ENCODE measurements at regions of chr6 and their contacts with region 1.

Region 1: GRCh38 chr6:31971993-31972708 is at the start of gene DXO:
- DNase-seq: peak; percentile 98
- ATAC-seq: peak; percentile 89
- H3K4me3 ChIP-seq: peak within 1 kb of the TSS; percentile 89
- H3K27ac ChIP-seq: peak within 1 kb of the TSS; percentile 86
- H3K4me1 ChIP-seq: peaks cover 23% of the 10 kb centered on the region
- H3K27me3 ChIP-seq: no peaks in the 10 kb centered on the region
- CTCF ChIP-seq: no peak
- total RNA-seq, gene DXO: 27.1 and 32.4 TPM in 2 replicates

Region 2: DNA sequence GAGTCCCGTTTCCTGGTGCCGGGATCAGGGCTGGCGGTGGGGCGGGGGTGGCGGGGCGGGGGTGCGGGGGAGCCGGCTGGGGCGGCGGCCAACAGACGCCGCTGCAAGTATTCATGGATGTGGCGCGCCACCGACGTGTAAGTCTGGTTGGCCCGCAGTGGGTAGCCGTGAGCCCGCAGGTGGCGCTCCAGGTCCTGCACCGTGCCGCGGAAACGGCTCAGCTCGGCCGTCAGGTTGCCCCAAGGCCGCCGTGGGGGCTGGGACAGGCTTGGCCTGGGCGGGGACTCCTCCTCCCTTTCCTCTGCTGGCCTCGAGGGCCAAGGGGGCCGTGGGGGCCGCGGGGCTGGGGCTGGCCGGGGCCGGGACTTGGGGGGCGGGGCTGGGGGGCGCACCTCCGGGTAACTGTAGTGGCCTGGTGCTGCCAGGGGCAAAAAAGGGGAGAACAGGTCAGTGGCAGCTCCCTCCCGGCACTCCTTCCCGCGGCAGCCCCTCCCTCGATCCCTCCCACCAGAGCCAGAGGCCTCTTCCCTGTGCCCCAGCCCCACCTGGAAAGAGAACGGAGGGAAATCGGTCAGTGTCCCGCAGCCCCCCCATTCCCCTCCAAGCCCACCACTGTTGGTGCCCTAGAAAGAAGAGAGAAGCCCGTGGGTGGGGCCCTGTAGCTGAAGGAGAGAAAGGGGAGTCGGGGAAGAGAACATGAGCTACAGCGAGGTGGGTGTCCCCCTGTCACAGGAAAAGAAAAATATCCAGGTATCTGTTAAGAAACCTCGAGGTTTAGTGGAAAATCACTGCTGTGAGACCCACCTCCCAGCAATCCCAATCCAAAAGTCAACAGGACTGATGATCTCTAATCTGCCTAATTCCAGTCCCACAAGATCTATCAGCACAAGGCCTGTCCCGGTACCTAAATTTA is 115.7 kb after region 1 on chr6:
- CTCF ChIA-PET with region 1: no interaction called
- POLR2A ChIA-PET with region 1: interaction called, 6 read pairs
- intact Hi-C with region 1: loop called (anchors 10 kb)
- DNase-seq: peak; percentile 88
- ATAC-seq: peak; percentile 71
- H3K4me3 ChIP-seq: no peak overlapping the region
- H3K27ac ChIP-seq: no peak overlapping the region
- H3K4me1 ChIP-seq: peaks cover 31% of the 10 kb centered on the region
- H3K27me3 ChIP-seq: no peaks in the 10 kb centered on the region
- CTCF ChIP-seq: peak; percentile 54

Measured in PC-3 (cell line).